ENCODE measurements at regions of chr6 and their contacts with region 1.

Region 1: GRCh38 chr6:36765594-36766398 is 68.2 kb downstream of the RAB44 start:
- DNase-seq: peak; percentile 86
- ATAC-seq: peak; percentile 93
- H3K4me3 ChIP-seq: no peak overlapping the region
- H3K27ac ChIP-seq: no peak overlapping the region
- H3K4me1 ChIP-seq: peaks cover 29% of the 10 kb centered on the region
- H3K27me3 ChIP-seq: no peaks in the 10 kb centered on the region
- CTCF ChIP-seq: peak; percentile 89

Region 2: DNA sequence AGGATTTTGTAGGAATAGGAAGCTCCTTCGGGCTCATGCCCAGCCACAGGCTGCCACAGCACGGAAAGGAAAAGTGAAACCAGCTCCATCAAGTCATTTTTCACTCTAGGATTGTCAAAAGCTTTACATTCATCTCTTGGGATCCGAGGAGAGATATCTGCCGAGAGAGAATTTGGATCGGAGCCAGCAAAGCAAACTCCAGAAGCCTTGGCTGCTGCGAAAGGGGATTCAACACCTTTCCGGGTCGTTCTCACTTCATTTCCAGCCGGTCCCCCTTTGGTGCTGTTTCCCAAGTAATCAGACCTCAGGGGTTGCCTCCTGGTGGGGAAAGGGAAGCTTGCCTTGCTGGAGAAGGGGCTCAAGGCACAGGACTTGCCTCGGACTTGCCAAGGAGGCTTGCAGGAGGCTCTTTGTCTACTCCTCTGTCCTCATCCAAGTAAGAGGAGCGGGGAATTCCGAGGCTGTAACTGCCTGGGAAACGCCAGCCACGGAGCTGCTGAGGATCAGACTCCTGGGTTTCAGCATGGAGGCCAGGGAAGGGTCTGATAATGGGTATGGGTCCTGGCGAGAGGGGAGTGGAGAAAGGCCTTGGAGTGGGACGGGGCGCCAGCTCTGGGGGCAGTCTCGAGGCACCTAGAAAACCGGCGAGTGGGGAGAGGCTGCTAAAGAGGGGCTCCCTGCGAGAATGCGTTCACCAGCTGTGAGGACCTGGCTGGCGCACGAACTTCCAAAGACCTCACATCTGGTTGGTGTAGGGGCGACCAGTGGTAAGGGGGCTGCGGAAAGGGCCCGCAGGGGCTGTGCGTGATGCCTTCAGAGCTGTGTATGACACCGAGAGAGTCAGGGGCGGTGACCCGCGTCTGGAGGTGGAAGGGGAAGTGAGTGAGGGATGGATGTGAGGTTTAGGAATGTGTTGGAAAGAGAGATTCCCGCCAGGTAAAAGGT is 379.0 kb before region 1 on chr6:
- intact Hi-C with region 1: no loop called
- DNase-seq: peak; percentile 69
- ATAC-seq: peak; percentile 57
- H3K4me3 ChIP-seq: peak overlapping the region; percentile 78
- H3K27ac ChIP-seq: peak overlapping the region; percentile 78
- H3K4me1 ChIP-seq: peaks cover 13% of the 10 kb centered on the region
- H3K27me3 ChIP-seq: no peaks in the 10 kb centered on the region
- CTCF ChIP-seq: peak; percentile 22

Region 3: GRCh38 chr6:36848658-36849441 is 83.1 kb after region 1 on chr6:
- intact Hi-C with region 1: loop called (anchors 5 kb)
- DNase-seq: peak; percentile 86
- ATAC-seq: peak; percentile 86
- H3K4me3 ChIP-seq: peak overlapping the region; percentile 18
- H3K27ac ChIP-seq: no peak overlapping the region
- H3K4me1 ChIP-seq: peaks cover 23% of the 10 kb centered on the region
- H3K27me3 ChIP-seq: no peaks in the 10 kb centered on the region
- CTCF ChIP-seq: no peak

Region 4: DNA sequence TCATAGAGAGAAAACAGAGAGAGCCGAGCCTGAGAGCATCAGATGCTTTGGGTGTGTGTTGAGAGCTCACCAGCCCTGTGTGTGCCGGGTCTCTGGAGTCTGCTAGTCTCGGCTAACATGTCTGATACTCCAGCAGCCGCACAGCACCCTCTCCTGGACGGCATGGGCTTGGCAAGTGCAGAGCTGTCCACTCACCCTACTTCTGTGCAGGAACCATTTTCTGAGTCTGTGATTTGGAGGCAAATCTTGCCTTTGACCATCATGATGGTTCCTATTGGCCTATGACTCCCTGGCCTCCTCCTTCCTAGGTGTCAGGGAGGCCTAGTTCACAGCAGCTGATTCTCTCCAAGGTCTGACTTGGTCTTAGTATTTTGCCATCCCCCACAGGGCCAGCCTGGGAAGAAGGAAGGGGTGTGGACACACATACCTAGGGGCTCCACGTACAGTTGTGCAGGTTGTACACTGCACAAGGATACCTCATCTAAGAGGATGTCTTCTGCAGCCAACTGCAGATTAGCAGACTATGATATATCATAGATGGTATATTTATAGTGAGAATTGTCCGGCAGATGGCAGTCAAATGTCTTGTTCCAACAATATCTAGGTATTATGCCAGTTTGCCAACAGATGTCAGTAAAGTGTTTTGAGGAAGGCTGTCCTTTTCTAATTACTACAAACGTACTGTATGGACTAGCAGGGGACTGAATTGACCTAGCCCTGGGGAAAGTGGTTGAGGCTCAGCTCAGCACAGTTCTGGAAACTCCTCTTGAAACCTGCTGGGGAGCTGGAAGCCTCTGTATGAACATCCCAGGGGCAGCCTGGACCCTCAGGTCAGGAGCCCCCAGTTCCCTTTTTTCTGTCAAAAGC is 252.6 kb after region 1 on chr6:
- intact Hi-C with region 1: loop called (anchors 10 kb)
- DNase-seq: peak; percentile 94
- ATAC-seq: peak; percentile 95
- H3K4me3 ChIP-seq: no peak overlapping the region
- H3K27ac ChIP-seq: no peak overlapping the region
- H3K4me1 ChIP-seq: no peaks in the 10 kb centered on the region
- H3K27me3 ChIP-seq: no peaks in the 10 kb centered on the region
- CTCF ChIP-seq: peak; percentile 79